Heart right ventricle (tissue), 16 donors: ENCODE measurements at regions of chr12 and their contacts with region 1.

Region 1: GRCh38 chr12:28569698-28570411 is 379.6 kb downstream of the CCDC91 start:
- DNase-seq: no peak
- ATAC-seq: peak in 6 of 8 donors; percentile 42 to 77 (median 62)
- H3K4me3 ChIP-seq: no peak overlapping the region
- H3K27ac ChIP-seq: no peak overlapping the region
- H3K4me1 ChIP-seq: peaks cover 0 to 13% (median 0%) of the 10 kb centered on the region in 9 donors
- H3K27me3 ChIP-seq: no peaks in the 10 kb centered on the region
- CTCF ChIP-seq: no peak

Region 2: DNA sequence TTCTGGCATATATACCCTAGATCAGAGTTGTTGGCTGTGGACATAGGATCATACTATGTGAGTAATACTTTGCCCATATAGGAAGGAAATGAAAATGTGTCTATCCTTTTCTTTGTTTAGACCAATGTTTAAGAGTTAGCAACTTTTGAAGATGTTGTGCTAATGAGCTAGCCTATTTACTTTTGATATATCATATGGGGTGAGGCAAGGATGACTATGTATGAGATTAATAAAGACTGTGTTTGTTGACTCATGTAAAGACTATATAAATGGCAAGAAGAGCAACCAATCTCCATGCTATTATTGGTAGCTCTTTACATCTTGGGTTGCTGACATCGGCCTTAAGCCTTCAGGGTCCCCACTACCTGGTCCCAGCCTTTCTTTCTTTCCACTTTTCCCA is 90.2 kb before region 1 on chr12:
- intact Hi-C with region 1: loop called in 1 of 10 experiments (anchors 10 kb)
- DNase-seq: no peak
- ATAC-seq: no peak
- H3K4me3 ChIP-seq: no peak overlapping the region
- H3K27ac ChIP-seq: no peak overlapping the region
- H3K4me1 ChIP-seq: peaks cover 0 to 8% (median 0%) of the 10 kb centered on the region in 9 donors
- H3K27me3 ChIP-seq: no peaks in the 10 kb centered on the region
- CTCF ChIP-seq: no peak

Region 3: GRCh38 chr12:28640519-28640918 is 70.7 kb after region 1 on chr12:
- intact Hi-C with region 1: no loop called
- DNase-seq: no peak
- ATAC-seq: no peak
- H3K4me3 ChIP-seq: no peak overlapping the region
- H3K27ac ChIP-seq: no peak overlapping the region
- H3K4me1 ChIP-seq: no peaks in the 10 kb centered on the region
- H3K27me3 ChIP-seq: no peaks in the 10 kb centered on the region
- CTCF ChIP-seq: no peak

Region 4: GRCh38 chr12:29286081-29286790 is 716.4 kb after region 1 on chr12:
- intact Hi-C with region 1: no loop called
- DNase-seq: no peak
- ATAC-seq: no peak
- H3K4me3 ChIP-seq: no peak overlapping the region
- H3K27ac ChIP-seq: no peak overlapping the region
- H3K4me1 ChIP-seq: peaks cover 0 to 17% (median 5%) of the 10 kb centered on the region in 9 donors
- H3K27me3 ChIP-seq: no peaks in the 10 kb centered on the region
- CTCF ChIP-seq: no peak